Upper lobe of right lung (tissue), 1 donor: ENCODE measurements at regions of chr15 and their contacts with region 1.

Region 1: DNA sequence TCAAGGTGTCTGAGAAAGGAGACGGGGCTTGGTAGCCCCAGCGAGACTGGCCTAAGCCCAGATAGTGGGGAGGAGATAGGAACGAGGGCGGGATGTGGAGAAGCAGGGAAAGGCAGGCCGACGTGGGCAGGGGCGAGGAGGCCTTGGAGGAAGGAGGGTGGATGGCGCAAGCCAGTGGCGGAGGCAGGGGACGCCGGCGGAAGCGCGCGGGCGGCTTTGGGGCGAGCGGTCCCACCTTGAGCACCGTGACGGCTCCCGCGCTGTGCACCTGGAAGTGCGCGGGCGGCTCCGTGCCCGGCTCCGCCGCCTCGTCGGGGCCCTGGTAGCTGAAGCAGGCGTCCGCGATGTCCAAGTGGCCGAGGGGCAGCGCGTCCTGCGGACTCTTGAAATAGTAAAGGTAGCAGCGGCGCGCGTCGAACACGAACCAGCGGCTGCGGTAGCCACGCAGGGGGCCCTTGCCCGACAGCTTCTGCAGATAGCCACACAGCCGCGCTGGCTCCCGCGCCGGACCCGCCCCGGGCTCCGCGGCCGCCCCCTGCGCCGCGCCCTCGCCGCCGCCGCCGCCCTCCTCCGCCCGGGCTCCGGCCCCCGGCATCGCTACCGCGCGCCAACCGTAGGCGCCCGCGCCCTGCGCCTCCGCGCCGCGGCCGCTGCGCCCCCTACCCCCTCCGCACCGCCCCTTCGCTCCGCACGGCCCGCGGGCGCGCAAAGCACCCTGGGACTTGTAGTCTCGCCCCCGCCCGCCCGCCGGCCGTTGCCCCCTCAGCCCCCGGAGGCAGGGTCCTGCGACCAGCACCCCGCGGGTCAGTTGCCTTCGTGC is at the start of gene TBC1D2B:
- DNase-seq: peak; percentile 89
- ATAC-seq: peak; percentile 75
- H3K4me3 ChIP-seq: peak within 1 kb of the TSS; percentile 96
- H3K27ac ChIP-seq: peak within 1 kb of the TSS; percentile 96
- H3K4me1 ChIP-seq: peaks cover 45% of the 10 kb centered on the region
- H3K27me3 ChIP-seq: no peaks in the 10 kb centered on the region
- CTCF ChIP-seq: no peak
- total RNA-seq, gene TBC1D2B: 88.7 TPM

Region 2: DNA sequence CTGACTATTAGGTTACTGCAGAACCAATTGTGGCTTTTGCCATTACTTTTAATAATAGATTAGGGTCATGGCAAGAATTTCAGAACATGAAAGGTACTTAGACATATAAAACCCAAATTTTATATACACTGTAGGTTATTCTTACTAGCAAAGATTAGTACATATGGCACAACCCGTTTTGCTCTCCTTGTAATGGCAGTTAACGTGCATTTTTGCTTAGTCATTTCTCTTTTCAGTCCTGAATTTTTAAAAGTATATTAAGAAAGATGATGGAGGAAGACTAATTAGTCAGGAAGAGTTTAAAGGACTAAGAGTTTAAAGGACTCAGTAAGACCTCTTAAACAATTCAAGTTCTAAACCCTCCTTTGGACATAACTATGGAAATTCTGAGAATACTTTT is 771.3 kb before region 1 on chr15:
- intact Hi-C with region 1: no loop called
- DNase-seq: no peak
- ATAC-seq: no peak
- H3K4me3 ChIP-seq: no peak overlapping the region
- H3K27ac ChIP-seq: no peak overlapping the region
- H3K4me1 ChIP-seq: peaks cover 8% of the 10 kb centered on the region
- H3K27me3 ChIP-seq: no peaks in the 10 kb centered on the region
- CTCF ChIP-seq: no peak

Region 3: GRCh38 chr15:78000091-78000926 is 77.0 kb before region 1 on chr15:
- intact Hi-C with region 1: loop called (anchors 10 kb)
- DNase-seq: peak; percentile 93
- ATAC-seq: peak; percentile 91
- H3K4me3 ChIP-seq: no peak overlapping the region
- H3K27ac ChIP-seq: peak overlapping the region; percentile 13
- H3K4me1 ChIP-seq: peaks cover 19% of the 10 kb centered on the region
- H3K27me3 ChIP-seq: no peaks in the 10 kb centered on the region
- CTCF ChIP-seq: peak; percentile 70